Mucosa of descending colon (tissue), 3 donors: ENCODE measurements at regions of chr18 and their contacts with region 1.

Region 1: DNA sequence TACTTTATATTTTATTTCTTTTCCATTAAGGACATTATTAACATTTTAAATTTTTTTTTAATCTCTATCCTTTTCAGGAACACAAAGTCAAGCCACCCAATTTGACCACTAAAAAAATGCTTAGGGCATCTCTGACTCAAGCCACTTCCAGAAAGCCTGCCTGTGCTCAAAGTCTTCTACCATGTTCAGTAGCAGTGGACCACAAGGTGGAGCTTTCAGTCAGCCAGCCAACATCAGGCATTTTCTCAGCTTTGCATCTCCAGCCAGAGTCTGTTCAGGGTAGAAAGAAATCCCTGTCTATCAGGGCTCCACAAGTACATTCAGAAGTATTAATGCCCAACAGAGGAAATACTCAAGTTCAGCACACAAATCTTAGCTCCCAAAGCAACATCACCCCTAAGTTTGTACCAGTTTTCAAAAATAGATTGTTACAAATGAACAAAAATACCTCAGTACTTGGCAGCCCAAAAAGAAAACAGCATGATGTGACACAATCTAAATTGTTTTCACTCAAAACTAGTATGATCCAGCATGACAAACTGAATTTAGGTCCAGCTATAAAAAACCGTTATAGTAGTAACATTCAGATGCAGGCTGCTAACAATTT is 37.6 kb downstream of the C18orf63 start:
- DNase-seq: peak in 2 of 3 donors; percentile 48 to 84
- ATAC-seq: peak; percentile 89
- H3K4me3 ChIP-seq: no peak overlapping the region
- H3K4me1 ChIP-seq: peaks cover 6% of the 10 kb centered on the region
- CTCF ChIP-seq: peak; percentile 36

Region 2: DNA sequence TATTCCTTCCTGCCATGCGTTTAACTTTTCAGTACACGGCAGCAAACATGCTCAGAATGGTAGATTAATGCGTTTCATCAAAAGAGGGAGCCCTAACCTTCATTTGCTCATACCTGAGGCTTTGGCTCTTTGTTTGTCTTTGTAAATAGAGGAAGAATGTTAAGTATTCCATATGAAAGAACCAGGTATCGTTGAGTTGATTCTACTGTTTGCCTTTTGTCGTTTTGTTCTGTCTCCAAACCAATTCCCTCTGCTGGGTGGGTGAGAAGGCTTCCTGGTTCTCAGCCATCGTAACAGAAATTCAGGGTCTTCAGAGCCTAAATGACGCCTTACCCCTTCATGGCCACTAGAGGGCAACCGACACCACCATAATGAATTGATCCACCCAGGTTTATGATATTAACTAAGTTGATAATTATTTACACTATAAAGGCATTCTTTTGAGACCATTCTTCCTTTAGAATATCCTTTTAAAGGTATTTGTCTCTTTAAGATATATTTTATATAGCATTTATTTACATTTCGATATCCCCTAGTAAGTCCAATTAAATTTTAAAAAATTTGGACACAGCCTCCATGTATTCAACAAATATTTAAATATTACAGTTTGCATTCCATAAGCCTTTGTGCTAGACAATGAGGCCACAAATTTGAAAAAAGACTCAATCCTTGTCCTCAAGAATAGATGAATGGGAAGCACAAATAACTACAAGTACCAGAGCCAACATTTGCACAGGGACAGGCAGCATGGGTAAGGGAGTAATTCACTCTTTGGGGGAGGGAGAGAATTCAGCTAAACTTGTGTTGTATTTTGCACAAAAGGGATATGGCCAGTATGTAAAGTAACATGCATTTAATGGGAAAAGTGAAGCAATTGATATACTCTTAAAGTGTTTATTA is 156.8 kb before region 1 on chr18:
- intact Hi-C with region 1: loop called in 1 of 2 experiments (anchors 5 kb)
- DNase-seq: peak in 1 of 3 donors; percentile 54
- ATAC-seq: peak; percentile 76
- H3K4me3 ChIP-seq: no peak overlapping the region
- H3K4me1 ChIP-seq: peaks cover 9% of the 10 kb centered on the region
- CTCF ChIP-seq: peak; percentile 76

Region 3: GRCh38 chr18:74495581-74496507 is 142.6 kb after region 1 on chr18 and contains the start of gene CNDP2:
- intact Hi-C with region 1: loop called (anchors 2 to 10 kb)
- DNase-seq: peak; percentile 100
- ATAC-seq: peak; percentile 94
- H3K4me3 ChIP-seq: peak within 1 kb of the TSS; percentile 90
- H3K4me1 ChIP-seq: peaks cover 23% of the 10 kb centered on the region
- CTCF ChIP-seq: no peak
- total RNA-seq, gene CNDP2: 148 to 263 (median 244) TPM

Region 4: DNA sequence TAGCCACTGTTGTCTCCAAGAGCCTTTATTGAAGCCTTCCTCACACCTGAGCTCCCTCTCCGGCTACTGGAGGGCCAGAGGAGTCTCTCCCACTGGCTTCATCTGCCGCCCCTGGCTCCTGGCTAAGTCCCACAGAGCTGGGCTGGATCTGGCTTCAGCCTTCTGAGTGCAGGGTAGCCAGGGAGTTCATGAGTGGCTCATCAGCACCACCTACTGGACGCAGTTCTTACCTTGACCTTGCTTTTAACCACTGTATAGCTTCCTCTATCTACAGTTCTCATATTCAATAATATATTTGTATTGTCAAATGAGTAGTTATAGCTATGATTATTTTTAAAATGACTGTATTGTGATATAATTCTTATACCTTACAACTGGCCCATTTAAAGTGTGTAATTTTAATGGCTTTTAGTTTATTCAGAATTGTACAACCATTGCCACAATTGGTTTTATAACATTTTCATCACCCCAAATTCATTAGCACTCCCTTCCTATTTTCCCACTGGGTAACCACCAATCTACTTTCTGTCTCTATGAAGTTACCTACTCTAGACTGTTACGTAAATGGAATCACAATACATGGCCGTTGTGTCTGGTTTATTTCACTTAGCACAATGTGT is 198.8 kb after region 1 on chr18:
- intact Hi-C with region 1: loop called (anchors 5 kb)
- DNase-seq: peak in 2 of 3 donors; percentile 80 to 98
- ATAC-seq: peak; percentile 98
- H3K4me3 ChIP-seq: no peak overlapping the region
- H3K4me1 ChIP-seq: no peaks in the 10 kb centered on the region
- CTCF ChIP-seq: peak; percentile 65